PC-9 (cell line): ENCODE measurements at regions of chr15 and their contacts with region 1.

Region 1: DNA sequence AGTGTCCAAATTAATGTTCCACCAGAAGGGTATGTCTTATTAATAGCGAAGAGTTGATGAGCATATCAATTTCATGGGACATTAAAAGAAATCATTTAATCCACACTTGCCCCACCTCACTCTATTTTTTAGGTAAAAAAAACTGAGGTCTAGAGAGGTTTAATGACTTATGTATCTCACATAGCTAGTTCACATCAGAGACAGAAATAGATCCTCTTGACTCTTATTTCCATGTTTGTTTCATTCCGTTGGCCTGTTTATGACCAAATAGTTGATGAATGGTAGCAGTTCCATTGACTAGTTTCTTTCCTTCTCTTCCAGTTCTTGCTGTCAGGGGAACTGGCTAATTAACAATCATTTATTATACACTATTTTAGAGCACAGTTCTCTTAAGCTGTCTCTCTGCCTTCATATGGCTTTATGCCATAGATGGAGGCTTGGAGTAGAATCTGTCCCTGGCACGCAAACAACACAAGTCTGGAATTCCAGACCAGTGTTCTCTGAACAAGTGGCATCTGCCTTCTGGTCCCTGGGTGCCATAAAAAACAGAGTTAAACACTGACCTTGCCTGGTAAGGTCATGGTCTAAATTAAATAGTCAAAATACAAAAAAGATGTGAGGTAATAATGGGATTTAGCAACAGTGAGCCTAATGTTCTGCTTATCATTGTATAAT is 220.0 kb upstream of the CGNL1 start:
- DNase-seq: no peak
- H3K4me3 ChIP-seq: no peak overlapping the region
- H3K27ac ChIP-seq: no peak overlapping the region
- H3K4me1 ChIP-seq: no peaks in the 10 kb centered on the region
- H3K27me3 ChIP-seq: no peaks in the 10 kb centered on the region
- CTCF ChIP-seq: no peak

Region 2: GRCh38 chr15:57235873-57236272 is 79.5 kb after region 1 on chr15:
- CTCF ChIA-PET with region 1: no interaction called
- POLR2A ChIA-PET with region 1: no interaction called
- intact Hi-C with region 1: loop called (anchors 2 kb)
- DNase-seq: no peak
- H3K4me3 ChIP-seq: no peak overlapping the region
- H3K27ac ChIP-seq: no peak overlapping the region
- H3K4me1 ChIP-seq: no peaks in the 10 kb centered on the region
- H3K27me3 ChIP-seq: no peaks in the 10 kb centered on the region
- CTCF ChIP-seq: no peak

Region 3: GRCh38 chr15:57259568-57260040 is 103.3 kb after region 1 on chr15:
- CTCF ChIA-PET with region 1: no interaction called
- POLR2A ChIA-PET with region 1: no interaction called
- intact Hi-C with region 1: no loop called
- DNase-seq: no peak
- H3K4me3 ChIP-seq: no peak overlapping the region
- H3K27ac ChIP-seq: no peak overlapping the region
- H3K4me1 ChIP-seq: no peaks in the 10 kb centered on the region
- H3K27me3 ChIP-seq: no peaks in the 10 kb centered on the region
- CTCF ChIP-seq: no peak